HAP-1 (cell line): ENCODE measurements at regions of chr4 and their contacts with region 1.

Region 1: GRCh38 chr4:158259955-158260575 is 49.8 kb downstream of the TMEM144 start:
- DNase-seq: peak in 1 of 2 experiments; percentile 55
- H3K4me3 ChIP-seq: no peak overlapping the region
- H3K4me1 ChIP-seq: peaks cover 9% of the 10 kb centered on the region; the same call in 1 of the 2 replicates
- H3K27me3 ChIP-seq: no peaks in the 10 kb centered on the region

Region 2: GRCh38 chr4:157655096-157655809 is 604.8 kb before region 1 on chr4:
- in situ Hi-C with region 1: no loop called
- DNase-seq: no peak
- H3K4me3 ChIP-seq: no peak overlapping the region
- H3K4me1 ChIP-seq: no peaks in the 10 kb centered on the region; the same call in 1 of the 2 replicates
- H3K27me3 ChIP-seq: no peaks in the 10 kb centered on the region

Region 3: DNA sequence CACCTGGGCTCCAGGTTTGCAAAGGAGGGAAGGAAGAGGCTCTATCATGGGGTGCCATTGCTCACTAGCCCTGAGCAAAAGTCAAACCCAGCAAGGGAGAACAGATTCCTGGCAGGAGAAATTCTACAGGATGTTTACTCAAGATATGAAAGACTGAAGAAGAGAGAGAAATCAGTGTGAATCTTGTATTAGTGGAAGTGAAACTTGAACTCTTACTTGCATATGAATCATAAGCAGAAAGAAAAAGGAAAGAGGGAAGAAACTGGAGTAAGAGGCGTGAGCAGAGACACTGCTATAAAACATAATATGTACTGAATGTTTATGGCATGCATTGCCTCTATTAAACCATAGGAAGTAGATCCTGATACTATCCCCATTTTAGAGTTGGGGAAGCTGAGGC is 350.7 kb after region 1 on chr4:
- in situ Hi-C with region 1: loop called (anchors 10 kb)
- DNase-seq: no peak
- H3K4me3 ChIP-seq: no peak overlapping the region
- H3K4me1 ChIP-seq: no peaks in the 10 kb centered on the region
- H3K27me3 ChIP-seq: no peaks in the 10 kb centered on the region